Breast epithelium (tissue), 4 donors: ENCODE measurements at regions of chr16 and their contacts with region 1.

Region 1: DNA sequence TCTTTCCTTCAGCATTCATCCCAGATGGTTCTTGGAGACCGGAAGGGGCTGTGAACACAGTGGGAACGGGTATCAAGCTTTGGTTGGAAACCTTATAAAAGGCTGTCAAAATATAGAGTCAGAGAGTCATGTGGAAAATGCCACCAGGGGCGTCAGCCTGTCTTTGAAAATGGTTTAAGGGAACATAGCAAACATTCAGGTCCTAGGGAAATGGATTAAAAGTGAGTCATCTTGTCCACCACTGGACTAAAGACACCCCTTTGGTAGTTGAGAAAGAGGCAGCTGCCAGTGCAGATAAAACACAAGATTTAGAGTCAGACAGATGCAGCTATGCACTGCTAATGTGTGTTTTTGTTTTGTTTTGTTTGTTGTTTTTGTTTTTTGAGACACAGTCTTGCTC is 47.8 kb upstream of the BCO1 start:
- DNase-seq: no peak
- H3K4me3 ChIP-seq: no peak overlapping the region
- H3K27ac ChIP-seq: no peak overlapping the region
- H3K4me1 ChIP-seq: no peaks in the 10 kb centered on the region
- H3K27me3 ChIP-seq: no peaks in the 10 kb centered on the region
- CTCF ChIP-seq: no peak
- POLR2A ChIP-seq: no peak

Region 2: DNA sequence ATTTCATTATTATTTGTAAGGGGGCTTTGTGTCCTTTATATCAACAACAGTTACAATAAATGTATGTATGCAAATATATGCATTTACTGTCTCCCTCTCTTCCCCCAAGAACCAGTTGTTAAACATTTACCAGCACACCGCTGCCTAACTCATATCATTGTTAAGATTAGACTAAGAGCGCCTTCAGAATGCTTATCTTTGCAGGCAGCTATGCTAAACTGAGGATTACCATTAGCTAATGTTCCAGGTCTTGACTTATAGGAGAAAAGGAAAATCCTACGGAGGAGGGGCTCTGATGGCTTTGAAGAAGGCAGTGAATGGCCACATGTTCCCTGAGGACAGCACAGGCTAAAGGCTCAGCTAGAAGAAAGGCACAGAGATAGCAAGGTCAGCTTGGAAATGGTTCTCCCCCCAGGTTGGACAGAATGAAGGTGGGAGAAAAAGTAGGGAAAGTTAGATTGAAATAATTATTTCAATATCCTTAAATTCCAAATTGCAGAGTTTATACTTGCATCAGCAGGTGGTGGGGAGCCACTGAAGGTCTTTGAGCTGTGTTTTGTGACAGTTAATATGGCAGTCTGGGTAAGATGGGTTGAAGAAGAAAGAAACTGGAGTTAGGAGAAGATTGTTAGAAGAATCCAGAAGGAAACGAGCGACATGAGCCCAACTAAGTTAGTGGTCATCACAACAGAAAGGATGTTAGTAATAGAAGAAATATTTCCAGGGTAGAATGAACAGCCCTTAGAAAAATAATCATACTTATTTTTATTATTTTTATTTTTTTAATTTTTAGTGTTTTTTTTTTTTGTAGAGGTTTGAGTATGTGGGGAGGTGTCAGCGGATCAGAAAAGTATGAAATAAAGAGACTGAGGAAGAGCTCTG is 1503.2 kb before region 1 on chr16:
- intact Hi-C with region 1: no loop called
- DNase-seq: no peak
- H3K4me3 ChIP-seq: no peak overlapping the region
- H3K27ac ChIP-seq: no peak overlapping the region
- H3K4me1 ChIP-seq: no peaks in the 10 kb centered on the region
- H3K27me3 ChIP-seq: no peaks in the 10 kb centered on the region
- CTCF ChIP-seq: no peak
- POLR2A ChIP-seq: no peak

Region 3: DNA sequence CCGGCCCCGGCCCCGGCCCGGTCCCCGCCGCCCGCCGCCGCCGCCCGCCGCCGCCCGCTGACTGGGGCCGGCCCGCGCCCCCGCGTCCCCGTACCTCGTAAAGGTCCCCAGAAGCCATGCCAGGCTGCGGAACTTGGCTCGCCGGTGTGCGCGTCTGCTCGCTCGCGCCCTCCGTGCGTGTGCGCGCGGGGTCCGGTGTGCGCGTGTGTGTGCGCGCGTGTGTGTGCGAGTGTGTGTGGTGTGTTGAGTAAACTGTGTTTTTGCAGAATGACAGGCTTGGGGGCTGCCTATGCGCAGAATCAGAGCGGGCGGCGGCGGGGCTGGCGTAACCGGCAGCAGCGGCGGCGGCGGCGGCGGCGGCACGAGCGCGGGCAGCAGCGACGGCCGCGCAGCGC is 386.6 kb before region 1 on chr16:
- intact Hi-C with region 1: no loop called
- DNase-seq: no peak
- H3K4me3 ChIP-seq: peak overlapping the region; percentile 56 to 88 (median 67)
- H3K27ac ChIP-seq: peak overlapping the region in 1 of 2 donors; percentile 66
- H3K4me1 ChIP-seq: no peaks in the 10 kb centered on the region
- H3K27me3 ChIP-seq: no peaks in the 10 kb centered on the region
- CTCF ChIP-seq: no peak
- POLR2A ChIP-seq: no peak

Region 4: DNA sequence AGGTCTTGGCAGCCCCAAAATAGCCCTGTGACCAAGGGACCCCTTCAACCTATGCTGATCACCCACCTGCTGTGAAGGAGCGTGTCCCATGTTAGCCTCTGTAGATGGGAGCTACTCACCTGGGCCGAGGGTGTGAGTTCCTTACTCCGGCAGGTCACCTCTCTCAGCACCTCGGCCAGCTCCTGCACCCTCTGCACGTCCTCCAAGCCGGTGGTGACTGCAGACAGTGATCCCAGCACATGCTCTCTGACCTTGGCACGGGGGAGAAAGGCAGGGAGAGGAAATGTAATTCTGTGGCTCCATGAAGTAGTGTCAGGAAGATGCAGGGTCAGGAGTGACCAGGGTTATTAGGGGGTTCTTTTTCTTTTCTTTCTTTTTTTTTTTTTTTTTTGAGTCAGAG is 19.8 kb before region 1 on chr16:
- intact Hi-C with region 1: loop called (anchors 1 kb)
- DNase-seq: no peak
- H3K4me3 ChIP-seq: no peak overlapping the region
- H3K27ac ChIP-seq: no peak overlapping the region
- H3K4me1 ChIP-seq: no peaks in the 10 kb centered on the region
- H3K27me3 ChIP-seq: no peaks in the 10 kb centered on the region
- CTCF ChIP-seq: no peak
- POLR2A ChIP-seq: no peak